ENCODE measurements at regions of chr2 and their contacts with region 1.

Region 1: DNA sequence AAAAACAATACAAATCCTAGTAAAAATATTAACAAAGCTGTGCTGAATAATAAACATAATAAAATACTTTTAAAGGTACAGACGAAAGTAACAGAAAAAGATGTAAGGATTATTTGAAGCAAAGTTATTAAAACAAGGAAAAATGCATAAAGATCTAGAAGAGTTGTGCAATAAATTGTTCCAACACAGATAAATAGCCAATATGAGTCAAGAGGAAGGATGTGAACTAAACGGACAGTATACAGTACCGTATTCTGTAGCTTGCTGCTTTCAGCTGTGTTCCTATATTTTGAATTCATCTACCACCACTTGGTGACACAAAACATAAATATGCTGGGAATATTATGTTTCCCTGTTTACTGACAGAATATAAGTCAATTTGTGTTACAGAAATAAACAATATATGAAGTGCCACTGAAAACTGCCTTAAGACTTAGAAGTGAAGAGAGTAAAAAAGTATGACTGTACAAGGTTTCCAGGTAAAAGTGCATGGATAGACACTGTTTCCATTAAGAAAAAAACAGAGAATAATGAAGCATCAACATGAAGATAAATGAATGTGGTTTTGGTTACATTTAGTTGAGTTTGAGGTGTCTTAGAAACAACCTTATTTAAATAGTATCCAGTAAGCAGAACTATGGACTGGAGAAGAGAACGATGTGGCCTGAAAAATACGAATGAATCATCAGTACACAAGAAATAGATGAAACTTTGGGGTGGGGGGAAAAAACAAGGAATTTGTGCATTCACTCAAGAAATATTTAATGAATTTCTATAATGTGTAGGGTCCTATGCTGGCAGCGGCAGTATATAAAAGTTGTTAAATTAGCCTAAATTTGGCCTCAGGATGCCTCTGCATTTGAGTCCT is 13.1 kb downstream of the PPP3R1 start:
- DNase-seq: peak; percentile 30
- H3K4me3 Mint-ChIP-seq: peak overlapping the region; percentile 54
- H3K27ac Mint-ChIP-seq: peak overlapping the region; percentile 88
- H3K4me1 Mint-ChIP-seq: peaks cover 38% of the 10 kb centered on the region
- H3K27me3 Mint-ChIP-seq: no peaks in the 10 kb centered on the region
- CTCF ChIP-seq: no peak

Region 2: GRCh38 chr2:68009526-68009925 is 229.7 kb before region 1 on chr2:
- CTCF ChIA-PET with region 1: no interaction called
- POLR2A ChIA-PET with region 1: no interaction called
- intact Hi-C with region 1: no loop called
- DNase-seq: no peak
- H3K4me3 Mint-ChIP-seq: no peak overlapping the region
- H3K27ac Mint-ChIP-seq: no peak overlapping the region
- H3K4me1 Mint-ChIP-seq: no peaks in the 10 kb centered on the region
- H3K27me3 Mint-ChIP-seq: no peaks in the 10 kb centered on the region
- CTCF ChIP-seq: no peak

Region 3: GRCh38 chr2:68225119-68225632 is 14.0 kb before region 1 on chr2:
- CTCF ChIA-PET with region 1: interaction called, 8 read pairs
- POLR2A ChIA-PET with region 1: interaction called, 12 read pairs
- intact Hi-C with region 1: no loop called
- DNase-seq: peak; percentile 78
- H3K4me3 Mint-ChIP-seq: peak overlapping the region; percentile 56
- H3K27ac Mint-ChIP-seq: peak overlapping the region; percentile 74
- H3K4me1 Mint-ChIP-seq: peaks cover 28% of the 10 kb centered on the region
- H3K27me3 Mint-ChIP-seq: no peaks in the 10 kb centered on the region
- CTCF ChIP-seq: peak; percentile 34

Region 4: DNA sequence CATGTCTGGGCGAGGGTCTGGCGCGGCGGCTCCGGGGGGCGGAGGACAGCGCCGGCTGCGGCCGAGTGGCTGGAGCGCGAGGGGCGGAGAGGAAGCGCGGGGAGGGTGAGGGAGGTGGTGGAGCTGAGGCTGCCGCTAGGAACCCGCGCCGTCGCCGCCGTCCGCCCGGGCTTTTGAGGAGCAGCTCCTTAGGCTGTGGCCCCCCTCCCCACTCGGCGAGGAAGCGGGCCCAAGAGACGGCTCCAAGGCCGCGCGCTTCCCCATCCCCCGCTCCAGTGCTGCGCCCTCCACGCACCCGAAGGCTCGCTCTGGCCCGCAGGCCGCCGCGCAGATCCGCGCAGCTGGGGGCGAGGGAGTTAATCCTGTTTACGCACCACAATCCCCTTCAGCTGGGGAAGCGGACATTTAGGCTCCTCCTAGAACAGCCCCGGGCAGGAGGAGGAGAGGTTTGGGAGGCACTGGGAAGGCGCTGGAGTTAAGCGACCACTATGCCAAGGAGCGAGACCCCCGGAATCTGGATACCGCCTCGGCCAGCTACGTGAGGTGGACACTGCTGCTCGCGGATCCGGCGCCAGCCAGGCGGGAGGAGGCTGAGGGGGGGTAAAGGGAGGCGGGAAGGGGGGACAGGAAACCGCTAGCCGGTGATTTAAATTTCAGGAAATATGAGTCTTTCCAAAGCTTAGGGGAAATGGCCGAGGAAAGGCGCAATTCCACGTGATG is 80.4 kb after region 1 on chr2 and contains the start of gene CNRIP1:
- CTCF ChIA-PET with region 1: no interaction called
- POLR2A ChIA-PET with region 1: no interaction called
- intact Hi-C with region 1: no loop called
- DNase-seq: peak; percentile 44
- H3K4me3 Mint-ChIP-seq: peak within 1 kb of the TSS; percentile 65
- H3K27ac Mint-ChIP-seq: no peak within 1 kb of the TSS
- H3K4me1 Mint-ChIP-seq: no peaks in the 10 kb centered on the region
- H3K27me3 Mint-ChIP-seq: peaks cover 9% of the 10 kb centered on the region
- CTCF ChIP-seq: no peak
- total RNA-seq, gene CNRIP1: 0.84 and 2.4 TPM in 2 replicates